MCF 10A (cell line): ENCODE measurements at regions of chr6 and their contacts with region 1.

Region 1: GRCh38 chr6:24205020-24205492 is 79.0 kb downstream of the NRSN1 start:
- DNase-seq: peak; percentile 61
- H3K4me3 Mint-ChIP-seq: no peak overlapping the region
- H3K27ac Mint-ChIP-seq: no peak overlapping the region
- H3K4me1 Mint-ChIP-seq: no peaks in the 10 kb centered on the region
- H3K27me3 Mint-ChIP-seq: peaks cover 4% of the 10 kb centered on the region
- CTCF ChIP-seq: peak; percentile 65

Region 2: DNA sequence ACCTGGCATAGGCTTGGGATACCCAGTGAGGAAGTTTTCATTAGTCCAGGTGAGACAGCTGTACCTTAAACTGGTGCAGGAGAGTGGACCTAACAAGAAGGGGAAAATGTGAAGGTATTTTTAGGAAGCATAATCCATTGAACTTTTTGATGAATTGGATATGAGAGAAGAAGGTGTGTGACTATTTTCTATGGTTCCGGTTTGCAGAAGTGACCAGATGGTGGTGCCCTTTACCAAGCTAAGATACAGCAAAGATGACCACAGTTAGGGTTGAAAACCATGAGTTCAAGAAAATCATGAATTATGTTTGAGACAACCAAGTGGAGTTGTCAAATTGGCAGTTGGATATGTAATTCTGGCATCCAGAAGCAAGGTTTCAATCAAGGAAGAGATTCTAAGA is 141.0 kb before region 1 on chr6:
- CTCF ChIA-PET with region 1: interaction called, 9 read pairs
- POLR2A ChIA-PET with region 1: no interaction called
- intact Hi-C with region 1: loop called (anchors 1 kb)
- DNase-seq: peak; percentile 44
- H3K4me3 Mint-ChIP-seq: no peak overlapping the region
- H3K27ac Mint-ChIP-seq: no peak overlapping the region
- H3K4me1 Mint-ChIP-seq: no peaks in the 10 kb centered on the region
- H3K27me3 Mint-ChIP-seq: no peaks in the 10 kb centered on the region
- CTCF ChIP-seq: peak; percentile 46

Region 3: GRCh38 chr6:24274441-24275083 is 69.5 kb after region 1 on chr6:
- CTCF ChIA-PET with region 1: no interaction called
- POLR2A ChIA-PET with region 1: no interaction called
- intact Hi-C with region 1: loop called (anchors 2 kb)
- DNase-seq: peak; percentile 35
- H3K4me3 Mint-ChIP-seq: no peak overlapping the region
- H3K27ac Mint-ChIP-seq: no peak overlapping the region
- H3K4me1 Mint-ChIP-seq: peaks cover 9% of the 10 kb centered on the region
- H3K27me3 Mint-ChIP-seq: peaks cover 14% of the 10 kb centered on the region
- CTCF ChIP-seq: peak; percentile 52

Region 4: GRCh38 chr6:24287239-24287638 is 82.2 kb after region 1 on chr6:
- CTCF ChIA-PET with region 1: no interaction called
- POLR2A ChIA-PET with region 1: no interaction called
- intact Hi-C with region 1: no loop called
- DNase-seq: no peak
- H3K4me3 Mint-ChIP-seq: no peak overlapping the region
- H3K27ac Mint-ChIP-seq: no peak overlapping the region
- H3K4me1 Mint-ChIP-seq: no peaks in the 10 kb centered on the region
- H3K27me3 Mint-ChIP-seq: no peaks in the 10 kb centered on the region
- CTCF ChIP-seq: no peak